Ovary (tissue), 10 donors: ENCODE measurements at regions of chr4 and their contacts with region 1.

Region 1: DNA sequence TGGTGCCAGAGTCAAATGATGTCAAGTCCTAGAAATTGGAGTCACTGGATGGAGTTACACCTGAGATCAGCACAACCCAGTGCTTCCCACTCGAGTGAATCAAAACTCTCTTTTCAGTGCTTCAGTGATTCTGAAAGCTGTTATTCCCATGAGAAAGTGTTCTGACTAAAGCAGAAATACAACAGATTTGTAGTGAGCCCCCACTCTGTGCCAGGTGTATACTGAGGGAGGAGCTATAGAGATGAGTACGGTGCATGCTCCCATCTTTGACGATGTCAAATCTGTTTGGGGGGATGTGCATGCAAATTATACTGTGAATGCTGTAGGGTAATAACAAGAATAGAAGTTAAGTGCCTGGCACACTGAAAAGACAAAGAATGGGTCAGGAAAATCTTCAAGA is 330.2 kb downstream of the HS3ST1 start:
- DNase-seq: no peak
- H3K4me3 ChIP-seq: no peak overlapping the region
- H3K27ac ChIP-seq: no peak overlapping the region
- H3K4me1 ChIP-seq: no peaks in the 10 kb centered on the region
- H3K27me3 ChIP-seq: no peaks in the 10 kb centered on the region
- CTCF ChIP-seq: no peak
- EP300 ChIP-seq: no peak
- POLR2A ChIP-seq: no peak

Region 2: GRCh38 chr4:10565166-10565780 is 533.2 kb before region 1 on chr4:
- intact Hi-C with region 1: loop called in 1 of 4 experiments (anchors 5 kb)
- DNase-seq: no peak
- H3K4me3 ChIP-seq: no peak overlapping the region
- H3K27ac ChIP-seq: no peak overlapping the region
- H3K4me1 ChIP-seq: no peaks in the 10 kb centered on the region
- H3K27me3 ChIP-seq: no peaks in the 10 kb centered on the region
- CTCF ChIP-seq: no peak
- EP300 ChIP-seq: no peak
- POLR2A ChIP-seq: no peak